MCF 10A (cell line): ENCODE measurements at regions of chr1 and their contacts with region 1.

Region 1: DNA sequence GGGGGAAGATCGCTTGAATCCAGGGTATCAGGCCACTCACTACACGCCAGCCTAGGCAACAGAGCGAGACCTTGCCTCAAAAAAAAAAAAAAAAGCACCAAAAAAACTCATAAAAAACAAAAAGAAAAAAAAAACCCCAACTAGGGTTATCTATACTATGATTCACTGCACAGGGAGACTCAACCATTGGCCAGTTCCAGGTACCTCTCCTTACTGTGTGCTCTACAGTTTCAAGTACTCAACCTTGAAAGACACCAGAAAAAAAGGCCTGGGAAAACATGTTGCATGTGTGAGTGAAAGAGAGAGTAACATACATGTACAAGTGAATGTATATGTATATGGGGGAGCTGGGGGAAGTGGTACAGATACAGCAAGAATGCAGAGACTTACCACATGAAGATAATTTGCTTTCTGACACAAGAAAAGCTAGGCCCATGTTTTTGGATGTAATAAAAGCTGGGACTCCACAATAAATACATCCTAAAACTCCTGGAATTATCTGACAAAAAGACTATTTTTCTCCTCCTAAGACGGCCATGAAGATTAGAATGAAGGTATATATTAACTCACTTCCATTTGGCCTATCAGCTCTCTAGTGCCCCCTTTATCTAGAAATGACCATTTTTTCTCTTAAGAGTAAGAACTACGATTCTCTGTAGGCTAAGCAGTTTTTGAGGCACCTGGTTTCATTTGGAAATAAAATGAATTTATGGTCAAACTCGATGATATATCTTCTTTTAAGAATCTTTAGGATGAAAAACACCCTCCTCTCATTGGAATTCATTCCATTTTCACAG is 52.2 kb downstream of the SLC27A3 start:
- DNase-seq: no peak
- H3K4me3 Mint-ChIP-seq: no peak overlapping the region
- H3K27ac Mint-ChIP-seq: peak overlapping the region; percentile 31
- H3K4me1 Mint-ChIP-seq: peaks cover 5% of the 10 kb centered on the region
- H3K27me3 Mint-ChIP-seq: no peaks in the 10 kb centered on the region
- CTCF ChIP-seq: peak; percentile 12

Region 2: DNA sequence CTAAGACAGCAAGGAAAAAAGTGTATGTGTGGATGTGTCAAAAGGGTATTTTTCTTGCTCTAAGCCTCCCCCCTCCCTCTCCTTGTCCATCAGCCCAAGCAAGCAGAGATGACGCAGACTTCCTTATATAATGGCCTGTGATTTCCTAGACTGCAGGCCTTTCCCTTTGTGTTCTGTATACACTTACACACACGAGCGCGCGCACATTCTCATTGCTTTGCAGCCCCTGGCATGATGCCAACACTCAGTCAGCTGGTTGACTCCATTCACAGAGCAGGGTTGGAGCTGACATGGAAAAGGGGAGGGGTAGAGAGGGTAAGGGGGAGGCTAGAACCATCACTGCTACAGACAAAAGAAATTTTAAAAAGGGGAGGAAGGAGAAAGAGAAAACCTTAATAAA is 53.6 kb after region 1 on chr1:
- CTCF ChIA-PET with region 1: interaction called, 10 read pairs
- POLR2A ChIA-PET with region 1: interaction called, 3 read pairs
- intact Hi-C with region 1: no loop called
- DNase-seq: peak; percentile 85
- H3K4me3 Mint-ChIP-seq: no peak overlapping the region
- H3K27ac Mint-ChIP-seq: no peak overlapping the region
- H3K4me1 Mint-ChIP-seq: peaks cover 3% of the 10 kb centered on the region
- H3K27me3 Mint-ChIP-seq: no peaks in the 10 kb centered on the region
- CTCF ChIP-seq: no peak

Region 3: DNA sequence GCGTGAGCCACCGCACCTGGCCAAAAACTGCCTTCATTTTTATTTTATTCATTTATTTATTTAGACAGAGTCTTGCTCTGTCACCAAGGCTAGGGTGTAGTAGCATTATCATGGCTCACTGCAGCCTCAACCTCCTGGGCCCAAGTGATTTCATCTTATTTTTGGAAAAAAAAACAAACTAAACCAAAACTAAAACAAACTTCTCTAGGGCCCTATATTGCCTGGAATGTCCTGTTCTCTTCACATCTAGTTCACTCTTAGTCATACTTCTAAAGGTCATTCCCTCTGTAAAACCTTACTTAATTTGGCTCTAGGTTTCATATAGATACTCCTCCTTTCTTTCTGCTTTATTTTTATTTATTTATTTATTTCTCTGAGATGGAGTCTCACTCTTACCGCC is 178.8 kb after region 1 on chr1:
- CTCF ChIA-PET with region 1: no interaction called
- POLR2A ChIA-PET with region 1: no interaction called
- intact Hi-C with region 1: no loop called
- DNase-seq: peak; percentile 30
- H3K4me3 Mint-ChIP-seq: no peak overlapping the region
- H3K27ac Mint-ChIP-seq: no peak overlapping the region
- H3K4me1 Mint-ChIP-seq: no peaks in the 10 kb centered on the region
- H3K27me3 Mint-ChIP-seq: no peaks in the 10 kb centered on the region
- CTCF ChIP-seq: no peak

Region 4: GRCh38 chr1:154263465-154264332 is 436.3 kb after region 1 on chr1:
- CTCF ChIA-PET with region 1: no interaction called
- POLR2A ChIA-PET with region 1: no interaction called
- intact Hi-C with region 1: no loop called
- DNase-seq: no peak
- H3K4me3 Mint-ChIP-seq: no peak overlapping the region
- H3K27ac Mint-ChIP-seq: peak overlapping the region; percentile 63
- H3K4me1 Mint-ChIP-seq: no peaks in the 10 kb centered on the region
- H3K27me3 Mint-ChIP-seq: no peaks in the 10 kb centered on the region
- CTCF ChIP-seq: no peak